ENCODE measurements at regions of chr10 and their contacts with region 1.

Region 1: DNA sequence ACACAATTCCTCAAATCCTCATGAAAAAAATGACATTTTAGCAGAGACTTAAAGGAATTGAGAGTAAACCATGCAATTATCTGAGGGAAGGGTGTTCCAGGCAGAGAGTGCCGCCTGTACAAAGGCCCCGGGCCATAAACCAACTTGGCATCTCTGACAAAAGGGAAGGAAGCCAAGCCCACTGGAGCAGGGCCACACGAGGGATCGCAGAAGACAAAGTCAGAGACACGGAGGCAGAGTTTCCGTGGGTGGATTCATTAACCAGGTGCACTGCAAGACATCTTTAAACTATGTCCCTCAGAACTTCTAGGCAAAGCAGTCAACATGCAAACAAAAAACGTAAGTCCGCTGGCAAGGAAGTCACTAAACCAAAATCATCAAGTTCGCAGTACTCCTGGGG is 92.0 kb downstream of the SFMBT2 start:
- DNase-seq: peak; percentile 25
- ATAC-seq: no peak
- H3K4me3 Mint-ChIP-seq: no peak overlapping the region
- H3K27ac Mint-ChIP-seq: peak overlapping the region; percentile 20
- H3K4me1 Mint-ChIP-seq: peaks cover 52% of the 10 kb centered on the region
- H3K27me3 Mint-ChIP-seq: no peaks in the 10 kb centered on the region

Region 2: DNA sequence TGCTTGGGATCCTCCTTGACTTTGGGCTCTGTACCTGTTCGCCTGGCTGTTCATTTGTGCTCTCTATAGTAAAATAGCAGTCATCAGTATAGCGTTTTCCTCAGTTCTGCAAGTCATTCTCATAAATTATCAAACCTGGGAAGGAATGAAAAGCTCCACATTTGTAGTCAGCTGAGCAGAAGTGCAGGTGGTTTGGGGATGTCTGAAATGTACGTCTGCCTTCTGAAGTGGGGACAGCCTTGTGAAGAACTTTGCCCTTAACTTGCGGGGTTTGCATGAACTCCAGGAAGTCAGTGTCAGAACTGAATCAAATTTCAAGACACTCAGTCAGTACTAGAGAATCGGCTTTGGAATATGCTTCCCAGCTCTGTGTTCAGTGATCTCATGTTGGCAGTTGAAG is 380.5 kb before region 1 on chr10:
- CTCF ChIA-PET with region 1: no interaction called
- POLR2A ChIA-PET with region 1: no interaction called
- intact Hi-C with region 1: no loop called
- DNase-seq: no peak
- ATAC-seq: no peak
- H3K4me3 Mint-ChIP-seq: no peak overlapping the region
- H3K27ac Mint-ChIP-seq: no peak overlapping the region
- H3K4me1 Mint-ChIP-seq: no peaks in the 10 kb centered on the region
- H3K27me3 Mint-ChIP-seq: peaks cover 5% of the 10 kb centered on the region

Region 3: GRCh38 chr10:7272008-7272407 is 46.8 kb before region 1 on chr10:
- CTCF ChIA-PET with region 1: interaction called, 3 read pairs
- POLR2A ChIA-PET with region 1: no interaction called
- intact Hi-C with region 1: loop called in 1 of 2 experiments (anchors 5 kb)
- DNase-seq: peak; percentile 23
- ATAC-seq: peak; percentile 37
- H3K4me3 Mint-ChIP-seq: peak overlapping the region; percentile 24
- H3K27ac Mint-ChIP-seq: peak overlapping the region; percentile 84
- H3K4me1 Mint-ChIP-seq: peaks cover 81% of the 10 kb centered on the region
- H3K27me3 Mint-ChIP-seq: no peaks in the 10 kb centered on the region